Activated naive CD4-positive, alpha-beta T cell treated with anti-CD3 and anti-CD28 coated beads for 36 hours (primary cell): ENCODE measurements at regions of chr13 and their contacts with region 1.

Region 1: DNA sequence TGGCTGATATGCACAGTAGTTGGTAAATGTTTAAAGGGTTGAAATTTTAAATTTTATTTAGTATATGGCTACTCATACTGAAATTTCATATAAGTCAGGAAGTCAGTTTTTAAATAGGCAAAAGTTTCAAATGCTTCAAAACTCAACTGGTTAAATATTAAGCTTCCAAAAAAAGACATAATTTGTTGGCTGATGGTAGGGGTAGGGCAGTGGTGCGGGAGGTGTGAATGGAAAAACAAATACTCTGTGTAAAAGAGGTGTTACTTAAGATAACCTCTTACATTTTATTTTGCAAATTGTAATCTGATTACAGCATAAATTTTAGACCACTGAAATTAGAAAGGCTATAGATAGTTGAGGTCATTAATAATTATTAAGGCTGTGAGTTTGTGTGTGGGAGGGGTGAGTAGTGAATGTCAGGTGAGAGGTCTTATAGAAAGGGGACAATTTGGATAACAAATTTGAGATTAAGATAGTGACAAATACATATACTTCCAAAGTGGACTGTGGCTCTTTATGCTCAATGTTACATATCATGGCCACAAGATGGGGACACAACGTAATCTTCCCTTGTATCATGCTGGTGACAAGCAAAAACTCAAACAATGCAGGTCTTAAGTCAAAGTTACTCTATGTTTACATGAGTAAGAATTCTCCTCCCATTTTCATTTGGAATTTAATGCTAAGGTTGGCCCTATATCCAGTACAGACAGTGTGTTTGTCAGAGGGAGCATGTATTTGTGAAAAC is 36.6 kb upstream of the OXGR1 start:
- DNase-seq: no peak
- H3K4me3 Mint-ChIP-seq: no peak overlapping the region
- H3K27ac Mint-ChIP-seq: no peak overlapping the region
- H3K4me1 Mint-ChIP-seq: no peaks in the 10 kb centered on the region
- H3K27me3 Mint-ChIP-seq: peaks cover 13% of the 10 kb centered on the region

Region 2: DNA sequence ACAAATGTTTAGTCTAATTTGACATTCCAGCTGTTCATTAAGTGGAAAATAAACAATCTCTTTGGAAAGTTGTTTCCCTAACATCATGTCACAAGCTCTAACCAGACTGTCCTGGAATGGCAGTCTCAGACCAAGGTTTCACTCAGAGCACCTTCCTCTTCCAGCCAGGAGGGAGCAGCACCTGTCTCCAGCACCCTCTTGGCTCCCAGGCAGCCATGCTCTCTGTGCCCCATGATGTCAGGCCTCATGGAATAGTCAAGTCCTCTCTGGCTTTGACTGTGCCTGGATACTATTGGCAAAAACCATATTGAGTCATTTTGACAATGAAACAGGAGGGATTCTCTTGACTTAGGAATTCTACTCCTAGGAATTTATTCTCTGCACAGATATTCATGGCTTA is 208.0 kb before region 1 on chr13:
- CTCF ChIA-PET with region 1: no interaction called
- intact Hi-C with region 1: loop called (anchors 5 kb)
- DNase-seq: no peak
- H3K4me3 Mint-ChIP-seq: no peak overlapping the region
- H3K27ac Mint-ChIP-seq: no peak overlapping the region
- H3K4me1 Mint-ChIP-seq: no peaks in the 10 kb centered on the region
- H3K27me3 Mint-ChIP-seq: no peaks in the 10 kb centered on the region

Region 3: DNA sequence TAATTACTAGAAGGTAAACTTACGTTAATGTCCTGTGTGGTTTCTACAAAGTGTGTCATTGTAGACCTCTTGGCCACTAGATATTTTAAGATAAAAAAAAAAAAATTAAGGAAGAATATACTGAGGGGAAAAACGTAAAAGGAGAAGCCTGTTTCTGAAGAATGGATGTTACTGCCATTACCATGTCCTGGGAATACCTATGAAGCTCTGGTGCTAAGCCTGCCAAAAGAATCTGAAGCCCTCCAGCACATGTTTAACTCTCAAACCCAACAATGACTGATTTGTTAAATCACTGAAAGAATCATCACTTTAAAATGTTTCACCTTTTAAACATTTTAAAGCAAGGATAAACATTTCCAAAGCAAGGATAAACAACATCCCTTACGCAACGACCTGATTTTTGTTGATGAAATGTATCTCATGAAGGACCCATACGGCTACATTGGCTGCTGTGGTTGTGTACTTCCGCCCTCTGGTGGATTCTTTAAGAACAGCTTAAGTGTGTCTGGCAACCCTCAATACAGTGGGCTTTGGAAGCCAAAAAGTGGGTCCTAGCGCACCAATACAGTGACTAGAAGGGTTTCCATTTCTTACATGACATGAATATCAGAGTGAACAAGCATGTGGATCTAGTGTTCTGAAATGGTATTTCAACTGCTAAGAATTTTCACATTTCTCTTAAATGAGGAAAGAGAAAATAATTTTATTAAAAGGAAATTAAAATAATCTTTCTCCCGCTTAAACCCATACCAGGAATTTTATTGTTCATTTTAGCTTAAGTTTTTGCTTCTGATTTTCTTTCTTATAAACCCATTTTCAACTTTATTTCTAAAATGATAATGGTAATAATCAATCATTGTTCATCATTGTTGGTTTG is 328.5 kb after region 1 on chr13:
- CTCF ChIA-PET with region 1: no interaction called
- intact Hi-C with region 1: loop called (anchors 5 kb)
- DNase-seq: peak; percentile 60
- H3K4me3 Mint-ChIP-seq: no peak overlapping the region
- H3K27ac Mint-ChIP-seq: no peak overlapping the region
- H3K4me1 Mint-ChIP-seq: no peaks in the 10 kb centered on the region
- H3K27me3 Mint-ChIP-seq: no peaks in the 10 kb centered on the region

Region 4: GRCh38 chr13:97460004-97460775 is 429.3 kb after region 1 on chr13:
- CTCF ChIA-PET with region 1: no interaction called
- intact Hi-C with region 1: no loop called
- DNase-seq: peak; percentile 18
- H3K4me3 Mint-ChIP-seq: no peak overlapping the region
- H3K27ac Mint-ChIP-seq: peak overlapping the region; percentile 8
- H3K4me1 Mint-ChIP-seq: peaks cover 31% of the 10 kb centered on the region
- H3K27me3 Mint-ChIP-seq: no peaks in the 10 kb centered on the region